ENCODE measurements at regions of chr4 and their contacts with region 1.

Region 1: GRCh38 chr4:155946486-155946885 is 7.2 kb downstream of the CTSO start:
- DNase-seq: no peak
- ATAC-seq: peak in 4 of 8 donors; percentile 39 to 85 (median 56)
- H3K4me3 ChIP-seq: no peak overlapping the region
- H3K27ac ChIP-seq: no peak overlapping the region
- H3K4me1 ChIP-seq: peaks cover 0 to under 1% (median 0%) of the 10 kb centered on the region in 9 donors
- H3K27me3 ChIP-seq: no peaks in the 10 kb centered on the region
- CTCF ChIP-seq: no peak

Region 2: GRCh38 chr4:155639704-155640523 is 306.6 kb before region 1 on chr4:
- intact Hi-C with region 1: no loop called
- DNase-seq: no peak
- ATAC-seq: peak in 2 of 8 donors; percentile 37 to 70
- H3K4me3 ChIP-seq: no peak overlapping the region
- H3K27ac ChIP-seq: peak overlapping the region in 1 of 10 donors; percentile 37
- H3K4me1 ChIP-seq: peaks cover 0 to 30% (median 0%) of the 10 kb centered on the region in 9 donors
- H3K27me3 ChIP-seq: no peaks in the 10 kb centered on the region
- CTCF ChIP-seq: no peak

Region 3: GRCh38 chr4:155809835-155810234 is 136.7 kb before region 1 on chr4:
- intact Hi-C with region 1: loop called in 3 of 10 experiments (anchors 5 kb)
- DNase-seq: peak in 1 of 2 donors; percentile 10
- ATAC-seq: peak in 7 of 8 donors; percentile 37 to 89 (median 71)
- H3K4me3 ChIP-seq: no peak overlapping the region
- H3K27ac ChIP-seq: no peak overlapping the region
- H3K4me1 ChIP-seq: no peaks in the 10 kb centered on the region
- H3K27me3 ChIP-seq: no peaks in the 10 kb centered on the region
- CTCF ChIP-seq: peak; percentile 39 to 83 (median 75)

Measured in heart right ventricle (tissue), 16 donors.